H1 (cell line): ENCODE measurements at regions of chr15 and their contacts with region 1.

Region 1: GRCh38 chr15:74768771-74769342 is 13.0 kb upstream of the CSK start:
- DNase-seq: peak in 1 of 2 experiments; percentile 82
- H3K4me3 ChIP-seq: peak overlapping the region in 1 of 4 experiments; percentile 40; a peak in 1 of 8 replicates
- H3K27ac ChIP-seq: no peak overlapping the region
- H3K4me1 ChIP-seq: peaks cover 0 to 10% (median 0%) of the 10 kb centered on the region in 4 experiments; a peak in 4 of 7 replicates
- H3K27me3 ChIP-seq: no peaks in the 10 kb centered on the region
- CTCF ChIP-seq: peak; percentile 67 to 92 (median 83)
- EP300 ChIP-seq: no peak
- POLR2A ChIP-seq: no peak
- RAD21 ChIP-seq: peak; percentile 88 to 93

Region 2: GRCh38 chr15:74598126-74598842 is 170.6 kb before region 1 on chr15:
- CTCF ChIA-PET with region 1: no interaction called
- POLR2A ChIA-PET with region 1: no interaction called
- DNase-seq: peak; percentile 62 to 96
- H3K4me3 ChIP-seq: peak overlapping the region in 3 of 4 experiments; percentile 3 to 48 (median 34); a peak in 4 of 8 replicates
- H3K27ac ChIP-seq: no peak overlapping the region
- H3K4me1 ChIP-seq: peaks cover 0 to 3% (median 3%) of the 10 kb centered on the region in 4 experiments; a peak in 5 of 7 replicates
- H3K27me3 ChIP-seq: no peaks in the 10 kb centered on the region; a peak in 1 of 7 replicates
- CTCF ChIP-seq: no peak
- EP300 ChIP-seq: no peak
- POLR2A ChIP-seq: peak in 1 of 2 experiments; percentile 42; a peak in 1 of 3 replicates
- RAD21 ChIP-seq: no peak

Region 3: GRCh38 chr15:74653426-74654123 is 115.3 kb before region 1 on chr15:
- CTCF ChIA-PET with region 1: interaction called, 21 read pairs
- POLR2A ChIA-PET with region 1: no interaction called
- DNase-seq: no peak
- H3K4me3 ChIP-seq: no peak overlapping the region
- H3K27ac ChIP-seq: no peak overlapping the region
- H3K4me1 ChIP-seq: no peaks in the 10 kb centered on the region
- H3K27me3 ChIP-seq: no peaks in the 10 kb centered on the region
- CTCF ChIP-seq: no peak
- EP300 ChIP-seq: no peak
- POLR2A ChIP-seq: no peak
- RAD21 ChIP-seq: no peak

Region 4: DNA sequence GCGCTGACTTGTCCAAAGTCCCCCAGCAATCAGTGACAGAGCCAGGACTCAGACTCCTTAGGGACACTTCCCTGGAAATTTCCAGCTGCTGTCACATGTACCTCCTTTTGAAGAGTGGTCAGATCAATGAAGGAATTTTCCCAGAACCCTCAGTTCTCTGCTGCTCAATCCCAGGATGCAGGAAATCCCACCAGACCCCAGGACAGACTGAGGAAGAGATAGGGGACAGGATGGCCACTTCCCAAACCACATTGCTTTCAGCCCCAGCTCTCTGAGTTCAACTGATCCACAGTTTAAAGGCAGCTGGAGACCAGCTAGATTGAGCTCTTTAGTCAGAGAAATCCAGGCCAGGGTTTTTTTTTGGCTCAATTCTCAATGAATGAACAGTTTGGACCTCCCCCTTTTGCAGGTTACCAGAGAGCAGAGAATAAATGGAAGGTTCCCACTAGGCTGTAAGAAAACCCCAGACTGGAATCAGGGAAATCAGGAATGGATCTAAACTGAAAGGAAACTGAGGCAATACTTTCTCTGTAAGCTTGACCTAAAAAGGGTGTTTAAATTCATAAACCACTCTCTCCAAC is 45.0 kb before region 1 on chr15:
- CTCF ChIA-PET with region 1: interaction called, 39 read pairs
- POLR2A ChIA-PET with region 1: interaction called, 3 read pairs
- DNase-seq: peak in 1 of 2 experiments; percentile 49
- H3K4me3 ChIP-seq: no peak overlapping the region
- H3K27ac ChIP-seq: no peak overlapping the region
- H3K4me1 ChIP-seq: peaks cover 0 to 5% (median 0%) of the 10 kb centered on the region in 4 experiments; a peak in 3 of 7 replicates
- H3K27me3 ChIP-seq: peaks cover 11 to 31% (median 26%) of the 10 kb centered on the region in 4 experiments
- CTCF ChIP-seq: no peak
- EP300 ChIP-seq: no peak
- POLR2A ChIP-seq: no peak
- RAD21 ChIP-seq: no peak

Region 5: GRCh38 chr15:74781431-74782258 is 12.8 kb after region 1 on chr15 and contains the start of gene CSK:
- CTCF ChIA-PET with region 1: interaction called, 543 read pairs
- POLR2A ChIA-PET with region 1: interaction called, 26 read pairs
- DNase-seq: peak in 1 of 2 experiments; percentile 79
- H3K4me3 ChIP-seq: peak within 1 kb of the TSS; percentile 55 to 82 (median 60)
- H3K27ac ChIP-seq: no peak within 1 kb of the TSS
- H3K4me1 ChIP-seq: peaks cover 4 to 25% (median 20%) of the 10 kb centered on the region in 4 experiments
- H3K27me3 ChIP-seq: peaks cover 0 to 15% (median 11%) of the 10 kb centered on the region in 4 experiments; a peak in 6 of 7 replicates
- CTCF ChIP-seq: peak; percentile 44 to 72 (median 50)
- EP300 ChIP-seq: no peak
- POLR2A ChIP-seq: no peak
- RAD21 ChIP-seq: no peak; a peak in 1 of 4 replicates
- total RNA-seq, gene CSK: 50.2 and 51.7 TPM in 2 replicates

Region 6: GRCh38 chr15:74826364-74826819 is 57.5 kb after region 1 on chr15 and contains the start of gene CPLX3:
- CTCF ChIA-PET with region 1: interaction called, 135 read pairs
- POLR2A ChIA-PET with region 1: no interaction called
- DNase-seq: peak in 1 of 2 experiments; percentile 84
- H3K4me3 ChIP-seq: peak within 1 kb of the TSS in 2 of 4 experiments; percentile 5 to 41; a peak in 3 of 8 replicates
- H3K27ac ChIP-seq: no peak within 1 kb of the TSS
- H3K4me1 ChIP-seq: peaks cover 0 to 9% (median 4%) of the 10 kb centered on the region in 4 experiments; a peak in 4 of 7 replicates
- H3K27me3 ChIP-seq: peaks cover 4 to 47% (median 29%) of the 10 kb centered on the region in 4 experiments
- CTCF ChIP-seq: no peak
- EP300 ChIP-seq: no peak
- POLR2A ChIP-seq: no peak
- RAD21 ChIP-seq: no peak
- total RNA-seq, gene CPLX3: not detected in 2 replicates

Region 7: DNA sequence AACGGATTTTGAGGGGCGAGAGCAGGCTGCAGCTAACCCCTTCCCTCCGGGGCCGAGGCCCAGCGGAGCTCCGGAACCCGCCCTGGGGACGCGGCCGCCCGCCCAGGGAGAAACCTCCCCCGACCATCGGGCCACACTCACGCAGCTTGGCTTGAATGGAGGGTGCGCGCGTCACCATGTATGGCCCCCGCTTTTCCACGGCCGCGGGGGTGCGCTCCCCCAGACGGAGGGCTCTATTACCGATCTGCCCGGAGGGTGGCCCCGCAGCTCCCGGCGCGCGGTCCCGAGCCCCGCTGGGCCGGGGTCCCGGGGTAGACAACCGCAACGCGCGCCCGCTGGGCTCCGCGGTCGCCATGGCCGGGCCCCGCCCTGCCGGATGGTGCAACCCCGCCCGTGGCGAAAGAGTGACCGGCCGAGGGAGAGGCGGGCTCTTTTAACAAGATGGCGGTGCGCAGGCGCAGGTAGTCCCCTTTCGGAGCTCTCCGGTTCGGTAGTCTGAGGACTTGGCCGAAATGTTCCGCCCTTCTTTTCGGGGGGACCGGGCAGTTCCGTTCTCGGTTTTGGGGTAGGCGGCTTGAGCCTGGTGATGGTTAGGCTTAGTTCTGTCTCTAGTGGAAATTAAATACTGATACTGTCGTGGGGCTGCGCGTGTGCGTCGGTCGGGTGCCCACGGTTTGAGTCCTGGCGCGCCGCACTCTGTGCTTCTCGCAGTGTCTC is 137.7 kb after region 1 on chr15 and contains the start of gene FAM219B:
- CTCF ChIA-PET with region 1: interaction called, 35 read pairs
- POLR2A ChIA-PET with region 1: interaction called, 5 read pairs
- DNase-seq: peak in 1 of 2 experiments; percentile 90
- H3K4me3 ChIP-seq: peak within 1 kb of the TSS; percentile 79 to 94 (median 90)
- H3K27ac ChIP-seq: peak within 1 kb of the TSS; percentile 71
- H3K4me1 ChIP-seq: peaks cover 2 to 4% (median 3%) of the 10 kb centered on the region in 4 experiments
- H3K27me3 ChIP-seq: no peaks in the 10 kb centered on the region
- CTCF ChIP-seq: no peak
- EP300 ChIP-seq: no peak
- POLR2A ChIP-seq: peak; percentile 61 to 69; a peak in 2 of 3 replicates
- RAD21 ChIP-seq: no peak
- total RNA-seq, gene FAM219B: 56.1 and 57.1 TPM in 2 replicates

Region 8: DNA sequence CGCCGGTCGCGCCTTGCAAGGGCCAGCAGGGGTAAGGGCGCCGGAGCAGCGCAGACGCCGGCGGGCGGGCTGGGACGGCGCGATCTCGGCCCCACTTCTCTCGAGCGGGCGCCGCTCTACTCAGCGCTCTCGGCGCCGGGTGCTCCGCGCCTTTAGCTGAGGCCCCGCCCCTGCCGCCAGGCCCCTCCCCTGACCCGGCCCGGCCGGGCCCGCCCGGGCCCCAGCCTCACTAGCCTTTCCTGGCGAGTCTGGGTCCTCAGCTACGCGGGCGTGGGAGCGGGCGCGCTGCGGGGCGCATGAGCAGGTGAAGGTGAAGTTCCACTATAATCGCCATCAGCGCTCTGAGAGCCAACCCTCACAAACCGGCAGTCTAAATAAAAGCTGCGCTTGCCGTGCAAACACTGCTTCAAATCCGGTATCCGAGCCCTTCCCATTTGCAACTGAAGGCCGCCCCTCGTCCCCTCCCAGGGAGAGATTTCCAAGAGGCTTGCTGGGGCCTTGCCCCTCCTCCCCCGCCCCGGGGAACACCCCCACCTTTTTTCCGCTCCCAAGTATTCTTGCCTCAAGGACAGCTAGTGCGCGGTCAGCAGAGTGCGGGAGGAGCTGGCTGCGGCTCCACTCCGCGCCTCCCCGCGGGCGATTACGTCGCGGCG is 187.9 kb after region 1 on chr15 and contains the start of gene RPP25:
- CTCF ChIA-PET with region 1: interaction called, 10 read pairs
- POLR2A ChIA-PET with region 1: no interaction called
- DNase-seq: peak in 1 of 2 experiments; percentile 90
- H3K4me3 ChIP-seq: peak within 1 kb of the TSS; percentile 41 to 77 (median 69)
- H3K27ac ChIP-seq: peak within 1 kb of the TSS; percentile 33; the same call in 1 of the 2 replicates
- H3K4me1 ChIP-seq: peaks cover 0 to 22% (median 13%) of the 10 kb centered on the region in 4 experiments; a peak in 6 of 7 replicates
- H3K27me3 ChIP-seq: peaks cover 5 to 36% (median 33%) of the 10 kb centered on the region in 4 experiments
- CTCF ChIP-seq: no peak
- EP300 ChIP-seq: no peak
- POLR2A ChIP-seq: peak in 1 of 2 experiments; percentile 87; a peak in 2 of 3 replicates
- RAD21 ChIP-seq: no peak
- total RNA-seq, gene RPP25: 19.4 and 19.8 TPM in 2 replicates